ENCODE measurements at regions of chr1 and their contacts with region 1.

Region 1: DNA sequence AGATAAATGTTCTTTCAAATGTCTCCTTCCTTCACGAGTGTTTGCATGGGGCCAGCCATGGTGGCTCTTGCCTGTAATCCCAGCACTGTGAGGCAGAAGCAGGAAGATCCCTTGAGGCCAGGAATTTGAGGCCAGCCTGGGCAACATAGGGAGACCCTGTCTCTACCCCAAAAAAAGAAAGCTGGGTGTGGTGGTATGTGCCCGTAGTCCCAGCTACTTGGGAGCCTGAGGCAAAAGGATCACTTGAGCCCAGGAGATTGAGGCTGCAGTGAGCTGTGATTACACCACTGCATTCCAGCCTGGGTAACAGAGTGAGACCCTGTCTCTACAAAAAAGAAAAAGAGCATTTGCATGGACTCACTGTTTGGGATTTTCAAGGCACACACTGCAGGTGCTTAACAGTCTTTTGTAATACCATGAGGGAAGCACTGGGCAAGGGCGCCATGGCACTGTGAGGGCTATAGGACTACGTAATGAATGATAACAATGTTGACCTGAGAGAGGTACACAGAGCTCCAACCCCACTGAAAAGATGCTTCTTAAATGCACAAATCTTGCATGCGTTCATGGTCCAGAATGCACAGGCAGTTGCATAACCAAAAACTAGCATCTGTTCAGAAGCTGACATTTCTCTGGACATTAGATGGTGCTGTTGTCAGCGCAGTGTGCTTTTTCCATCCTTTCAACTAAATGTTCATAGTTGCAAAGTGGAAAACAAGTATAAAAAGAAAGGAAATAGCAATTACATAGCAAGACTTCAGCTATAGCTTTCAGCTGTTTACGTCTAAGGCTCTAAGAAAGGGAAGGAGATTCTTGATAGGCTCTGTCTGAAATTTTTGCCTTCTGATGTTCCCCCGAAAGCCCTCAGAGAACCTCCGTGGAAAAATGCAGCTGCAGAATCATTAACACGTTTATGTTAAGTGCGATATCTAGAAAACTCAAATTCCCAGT is 7.8 kb upstream of the TARBP1 start:
- DNase-seq: peak; percentile 34
- H3K4me3 ChIP-seq: no peak overlapping the region
- H3K27ac ChIP-seq: no peak overlapping the region
- H3K4me1 ChIP-seq: peaks cover 0 to 2% of the 10 kb centered on the region in 2 experiments; a peak in 1 of 4 replicates
- H3K27me3 ChIP-seq: no peaks in the 10 kb centered on the region
- CTCF ChIP-seq: peak; percentile 68
- EP300 ChIP-seq: no peak
- RAD21 ChIP-seq: peak; percentile 84

Region 2: GRCh38 chr1:234427950-234428642 is 58.7 kb before region 1 on chr1:
- CTCF ChIA-PET with region 1: no interaction called
- POLR2A ChIA-PET with region 1: no interaction called
- DNase-seq: no peak
- H3K4me3 ChIP-seq: no peak overlapping the region
- H3K27ac ChIP-seq: no peak overlapping the region
- H3K4me1 ChIP-seq: no peaks in the 10 kb centered on the region
- H3K27me3 ChIP-seq: no peaks in the 10 kb centered on the region
- CTCF ChIP-seq: no peak
- EP300 ChIP-seq: no peak
- RAD21 ChIP-seq: no peak

Region 3: DNA sequence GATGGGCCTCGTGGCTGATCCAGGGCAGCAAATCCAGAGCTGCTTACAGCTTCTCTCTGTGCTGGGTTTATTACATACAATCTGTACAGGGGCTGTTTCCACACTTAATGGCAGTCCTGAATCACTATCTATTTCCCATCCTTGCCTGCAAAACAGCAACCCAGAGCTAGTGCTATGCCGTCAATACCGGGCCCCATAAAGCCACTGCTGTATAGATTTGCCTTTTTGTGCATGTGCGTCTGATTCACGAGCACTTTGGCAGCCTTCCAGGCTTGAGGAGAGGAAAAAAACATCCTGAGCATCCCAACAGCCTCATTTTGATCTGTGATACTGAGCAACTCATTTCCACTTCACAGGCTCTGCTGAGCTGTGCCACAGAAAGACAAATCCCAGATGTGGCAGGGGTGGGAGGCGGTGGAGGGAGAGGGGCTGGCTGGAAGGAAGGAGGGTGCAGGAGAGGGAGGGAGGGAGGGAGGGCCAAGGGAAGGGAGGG is 57.4 kb after region 1 on chr1:
- CTCF ChIA-PET with region 1: interaction called, 10 read pairs
- POLR2A ChIA-PET with region 1: no interaction called
- DNase-seq: peak; percentile 86
- H3K4me3 ChIP-seq: no peak overlapping the region; a peak in 1 of 4 replicates
- H3K27ac ChIP-seq: peak overlapping the region; percentile 92 to 100
- H3K4me1 ChIP-seq: peaks cover 23 to 67% of the 10 kb centered on the region in 2 experiments
- H3K27me3 ChIP-seq: no peaks in the 10 kb centered on the region
- CTCF ChIP-seq: no peak
- EP300 ChIP-seq: peak; percentile 88 to 94
- RAD21 ChIP-seq: peak; percentile 30; the same call in 1 of the 2 replicates

Region 4: DNA sequence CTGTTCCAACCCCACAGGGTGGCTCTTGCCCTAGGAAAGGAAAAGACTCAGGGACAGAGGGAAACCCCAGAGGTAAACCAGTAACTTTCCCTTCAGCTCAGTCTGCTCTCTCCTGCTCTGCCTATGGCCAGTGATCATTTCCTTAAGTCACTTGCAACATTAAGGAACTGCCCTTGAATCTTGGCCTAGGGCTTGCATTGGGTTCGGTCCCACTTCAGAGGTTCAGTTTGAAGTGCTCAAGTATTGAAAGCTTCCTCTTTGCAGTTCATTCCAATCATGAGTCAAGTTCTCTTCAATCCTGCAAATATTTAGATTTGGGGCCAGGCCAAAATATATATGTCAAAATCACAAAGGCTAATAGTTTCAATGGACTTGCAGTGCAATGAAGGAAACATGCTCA is 220.9 kb after region 1 on chr1:
- CTCF ChIA-PET with region 1: no interaction called
- POLR2A ChIA-PET with region 1: no interaction called
- DNase-seq: no peak
- H3K4me3 ChIP-seq: no peak overlapping the region
- H3K27ac ChIP-seq: no peak overlapping the region
- H3K4me1 ChIP-seq: peaks cover 0 to 14% of the 10 kb centered on the region in 2 experiments; a peak in 2 of 4 replicates
- H3K27me3 ChIP-seq: no peaks in the 10 kb centered on the region
- CTCF ChIP-seq: no peak
- EP300 ChIP-seq: no peak
- RAD21 ChIP-seq: no peak

Region 5: DNA sequence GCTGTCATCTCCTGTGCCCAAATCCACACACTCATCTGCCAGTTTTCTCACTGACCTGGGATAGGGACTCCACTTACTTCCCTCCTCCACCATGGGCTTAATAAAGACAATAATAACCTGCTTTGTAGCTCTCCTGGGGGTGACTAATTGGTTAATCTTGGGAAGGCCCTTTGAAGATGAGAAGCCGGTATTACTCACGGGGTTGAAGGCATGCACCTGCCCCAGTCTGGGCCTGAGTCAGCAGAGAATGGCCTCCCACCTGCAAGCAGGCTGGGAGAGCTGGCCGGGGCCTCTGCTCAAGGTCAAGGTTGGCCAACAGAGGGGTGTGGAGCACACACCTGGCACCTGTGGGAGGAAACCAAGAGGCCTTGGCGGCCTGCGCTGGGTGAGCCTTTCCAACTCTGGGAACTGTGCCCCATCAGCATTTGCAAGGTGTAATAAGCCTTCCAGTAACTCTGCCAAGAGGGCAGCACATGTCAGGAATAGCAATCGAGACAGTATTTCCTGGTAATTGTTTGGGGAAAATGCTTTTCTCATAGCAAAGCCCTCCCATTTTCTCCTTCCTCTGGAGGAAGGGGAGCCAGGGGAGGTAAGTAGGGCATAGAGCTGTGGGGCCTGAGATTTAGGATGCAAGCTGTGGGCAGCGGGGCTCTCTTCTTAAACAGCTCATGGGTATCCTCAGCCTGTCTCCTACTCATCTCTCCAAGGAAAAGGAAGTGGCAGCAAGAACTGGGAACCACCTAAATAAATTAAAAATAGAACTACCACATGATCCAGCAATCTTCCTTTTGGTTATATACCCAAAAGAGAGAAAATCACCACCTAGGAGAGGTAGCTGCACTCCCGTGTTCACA is 592.9 kb after region 1 on chr1:
- CTCF ChIA-PET with region 1: interaction called, 39 read pairs
- POLR2A ChIA-PET with region 1: no interaction called
- DNase-seq: no peak
- H3K4me3 ChIP-seq: no peak overlapping the region
- H3K27ac ChIP-seq: no peak overlapping the region
- H3K4me1 ChIP-seq: peaks cover 28 to 31% of the 10 kb centered on the region in 2 experiments; a peak in 3 of 4 replicates
- H3K27me3 ChIP-seq: no peaks in the 10 kb centered on the region
- CTCF ChIP-seq: no peak
- EP300 ChIP-seq: no peak
- RAD21 ChIP-seq: no peak

Region 6: GRCh38 chr1:235087896-235088295 is 601.1 kb after region 1 on chr1:
- CTCF ChIA-PET with region 1: interaction called, 39 read pairs
- POLR2A ChIA-PET with region 1: no interaction called
- DNase-seq: no peak
- H3K4me3 ChIP-seq: no peak overlapping the region
- H3K27ac ChIP-seq: no peak overlapping the region
- H3K4me1 ChIP-seq: peaks cover 11 to 15% of the 10 kb centered on the region in 2 experiments; a peak in 3 of 4 replicates
- H3K27me3 ChIP-seq: no peaks in the 10 kb centered on the region
- CTCF ChIP-seq: no peak
- EP300 ChIP-seq: no peak
- RAD21 ChIP-seq: no peak

Region 7: DNA sequence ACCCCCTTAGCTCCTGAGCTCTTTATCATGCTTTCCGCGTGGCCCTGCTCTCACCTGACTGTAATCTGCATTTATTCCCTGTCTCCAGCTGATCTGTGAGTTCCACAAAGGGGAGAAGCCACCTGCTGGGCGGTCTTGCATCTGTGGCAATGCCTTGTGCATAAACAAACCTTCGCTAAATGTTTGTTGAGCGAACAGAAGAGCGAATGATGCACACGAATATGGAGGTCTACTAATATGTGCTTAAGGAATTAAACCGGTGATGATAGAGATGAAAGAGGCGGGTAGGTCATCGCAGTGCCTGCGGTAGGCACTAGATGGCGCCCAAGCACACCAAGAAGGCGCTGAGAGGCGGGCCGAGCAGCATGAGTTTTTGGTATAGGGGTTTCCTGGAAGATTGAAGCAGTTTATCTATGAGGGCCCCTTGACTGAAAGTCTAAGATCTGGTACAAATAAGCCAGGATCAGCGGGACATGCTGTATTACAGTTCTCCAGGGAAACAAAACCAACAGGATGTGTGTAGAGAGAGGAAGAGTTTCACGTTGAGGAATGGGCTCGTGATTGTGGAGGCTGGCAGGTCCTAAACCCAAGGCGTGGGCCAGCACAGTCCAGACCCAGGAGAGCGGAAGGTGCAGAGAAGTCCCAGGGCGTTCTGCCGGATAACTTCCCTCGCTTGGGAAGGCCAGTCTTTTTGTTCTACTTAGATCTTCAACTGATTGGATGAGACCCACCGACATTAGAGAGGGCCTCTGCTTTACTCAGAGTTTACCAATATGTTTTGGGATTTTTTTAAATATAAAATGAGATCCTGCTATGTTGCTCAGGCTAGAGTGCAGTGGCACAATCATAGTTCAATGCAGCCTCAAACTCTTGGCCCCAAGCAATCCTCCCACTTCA is 607.2 kb after region 1 on chr1:
- CTCF ChIA-PET with region 1: interaction called, 22 read pairs
- POLR2A ChIA-PET with region 1: no interaction called
- DNase-seq: peak; percentile 83
- H3K4me3 ChIP-seq: no peak overlapping the region; a peak in 1 of 4 replicates
- H3K27ac ChIP-seq: no peak overlapping the region
- H3K4me1 ChIP-seq: peaks cover 4 to 8% of the 10 kb centered on the region in 2 experiments; a peak in 1 of 4 replicates
- H3K27me3 ChIP-seq: no peaks in the 10 kb centered on the region
- CTCF ChIP-seq: peak; percentile 96
- EP300 ChIP-seq: no peak
- RAD21 ChIP-seq: peak; percentile 88

Region 8: DNA sequence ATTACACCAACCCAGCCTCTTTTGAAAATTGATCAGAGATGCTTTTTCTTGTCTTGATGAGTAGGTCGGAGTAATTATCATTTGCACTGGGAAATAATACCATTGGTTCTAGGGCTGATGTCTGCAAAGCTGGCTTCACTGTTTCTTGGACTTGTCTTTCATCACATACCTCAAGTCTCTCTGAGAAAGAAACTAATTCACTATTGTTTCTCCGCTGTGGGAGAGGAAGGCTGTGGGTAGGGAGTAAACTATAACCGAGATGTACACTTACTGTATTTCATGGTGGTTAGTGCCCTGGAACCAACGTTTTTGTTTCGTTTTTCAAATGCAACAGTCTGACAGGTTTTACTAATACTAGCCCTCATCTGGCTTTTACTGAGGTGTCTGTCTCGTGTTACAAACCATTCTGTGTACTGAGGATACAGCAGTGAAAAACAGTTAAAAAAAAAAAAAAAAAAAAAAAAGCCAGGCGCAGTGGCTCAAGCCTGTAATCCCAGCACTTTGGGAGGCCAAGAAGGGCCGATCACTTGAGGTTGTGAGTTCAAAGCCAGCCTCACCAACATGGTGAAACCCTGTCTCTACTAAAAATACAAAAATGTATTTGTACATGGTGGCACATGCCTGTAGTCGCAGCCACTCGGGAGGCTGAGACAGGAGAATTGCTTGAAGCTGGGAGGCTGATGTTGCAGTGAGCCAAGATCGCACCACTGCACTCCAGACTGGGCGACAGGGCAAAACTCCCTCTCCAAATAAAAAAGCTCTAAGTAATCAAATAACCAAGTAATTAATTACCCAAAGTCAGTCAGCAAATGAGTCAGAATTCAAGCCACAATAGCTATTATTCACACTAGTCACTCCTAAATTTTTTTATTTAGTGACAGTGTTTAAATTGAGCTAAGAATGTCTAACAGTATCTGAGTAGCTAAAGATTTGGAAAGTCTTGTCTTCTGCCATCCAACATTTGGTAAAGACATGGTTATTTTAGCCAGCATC is 618.6 kb after region 1 on chr1:
- CTCF ChIA-PET with region 1: interaction called, 12 read pairs
- POLR2A ChIA-PET with region 1: no interaction called
- DNase-seq: no peak
- H3K4me3 ChIP-seq: no peak overlapping the region
- H3K27ac ChIP-seq: no peak overlapping the region
- H3K4me1 ChIP-seq: peaks cover 0 to 2% of the 10 kb centered on the region in 2 experiments; a peak in 1 of 4 replicates
- H3K27me3 ChIP-seq: no peaks in the 10 kb centered on the region
- CTCF ChIP-seq: no peak
- EP300 ChIP-seq: no peak
- RAD21 ChIP-seq: no peak

Measured in SK-N-SH (cell line).